CD8-positive, alpha-beta T cell (primary cell): ENCODE measurements at regions of chr22 and their contacts with region 1.

Region 1: GRCh38 chr22:30386960-30387827 is at the start of gene RNF215:
- DNase-seq: peak; percentile 60 to 91 (median 75)
- ATAC-seq: peak; percentile 79
- H3K4me3 ChIP-seq: peak within 1 kb of the TSS; percentile 33 to 40
- H3K4me3 Mint-ChIP-seq: peak within 1 kb of the TSS; percentile 85
- H3K27ac ChIP-seq: no peak within 1 kb of the TSS
- H3K27ac Mint-ChIP-seq: peak within 1 kb of the TSS; percentile 82
- H3K4me1 ChIP-seq: peaks cover 16% of the 10 kb centered on the region
- H3K4me1 Mint-ChIP-seq: peaks cover 26% of the 10 kb centered on the region
- H3K27me3 ChIP-seq: peaks cover 0 to 2% of the 10 kb centered on the region in 2 experiments
- H3K27me3 Mint-ChIP-seq: no peaks in the 10 kb centered on the region
- CTCF ChIP-seq: peak; percentile 87
- total RNA-seq, gene RNF215: 7.0 to 7.4 TPM

Region 2: DNA sequence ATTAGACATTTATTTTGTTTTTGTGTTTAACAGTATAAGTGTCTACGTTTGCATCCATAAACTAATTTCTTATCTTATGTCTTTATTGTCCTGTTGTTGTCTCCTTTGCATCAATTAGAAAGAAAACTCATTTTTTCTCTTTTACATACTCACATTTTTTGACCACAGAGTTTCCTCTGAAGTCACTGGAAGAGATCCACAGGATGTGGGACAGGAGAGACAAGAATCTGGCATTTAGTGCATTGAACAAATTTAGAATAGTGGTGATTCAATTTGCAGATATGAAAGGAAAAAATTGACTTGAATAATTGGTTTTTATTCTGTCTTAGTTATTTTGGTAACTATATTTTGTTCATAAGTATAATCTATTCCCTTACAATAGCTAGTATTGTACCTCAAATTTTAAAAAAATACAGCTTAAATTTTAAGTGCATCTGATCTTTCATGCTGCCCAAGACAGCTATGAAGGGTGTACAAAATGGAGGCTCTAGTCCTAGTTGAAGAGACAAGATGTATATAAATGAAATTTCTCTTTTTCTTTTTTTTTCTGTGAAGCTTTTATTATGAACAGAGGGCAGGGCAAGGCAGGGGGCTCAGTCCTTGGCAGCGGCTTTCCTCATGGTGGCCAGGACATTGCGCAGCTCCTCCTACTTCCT is 282.6 kb before region 1 on chr22:
- CTCF ChIA-PET with region 1: interaction called, 32 read pairs
- POLR2A ChIA-PET with region 1: no interaction called
- intact Hi-C with region 1: loop called (anchors 1 kb)
- DNase-seq: peak in 1 of 9 experiments; percentile 16
- ATAC-seq: no peak
- H3K4me3 ChIP-seq: no peak overlapping the region
- H3K4me3 Mint-ChIP-seq: no peak overlapping the region
- H3K27ac ChIP-seq: no peak overlapping the region
- H3K27ac Mint-ChIP-seq: no peak overlapping the region
- H3K4me1 ChIP-seq: peaks cover 14% of the 10 kb centered on the region
- H3K4me1 Mint-ChIP-seq: peaks cover 20% of the 10 kb centered on the region
- H3K27me3 ChIP-seq: no peaks in the 10 kb centered on the region
- H3K27me3 Mint-ChIP-seq: no peaks in the 10 kb centered on the region
- CTCF ChIP-seq: no peak

Region 3: GRCh38 chr22:30310881-30311771 is 76.1 kb before region 1 on chr22:
- CTCF ChIA-PET with region 1: interaction called, 12 read pairs
- POLR2A ChIA-PET with region 1: interaction called, 3 read pairs
- intact Hi-C with region 1: no loop called
- DNase-seq: no peak
- ATAC-seq: no peak
- H3K4me3 ChIP-seq: no peak overlapping the region
- H3K4me3 Mint-ChIP-seq: peak overlapping the region; percentile 63
- H3K27ac ChIP-seq: peak overlapping the region; percentile 53 to 77
- H3K27ac Mint-ChIP-seq: peak overlapping the region; percentile 98
- H3K4me1 ChIP-seq: peaks cover 98% of the 10 kb centered on the region
- H3K4me1 Mint-ChIP-seq: peaks cover 96% of the 10 kb centered on the region
- H3K27me3 ChIP-seq: no peaks in the 10 kb centered on the region
- H3K27me3 Mint-ChIP-seq: no peaks in the 10 kb centered on the region
- CTCF ChIP-seq: no peak

Region 4: DNA sequence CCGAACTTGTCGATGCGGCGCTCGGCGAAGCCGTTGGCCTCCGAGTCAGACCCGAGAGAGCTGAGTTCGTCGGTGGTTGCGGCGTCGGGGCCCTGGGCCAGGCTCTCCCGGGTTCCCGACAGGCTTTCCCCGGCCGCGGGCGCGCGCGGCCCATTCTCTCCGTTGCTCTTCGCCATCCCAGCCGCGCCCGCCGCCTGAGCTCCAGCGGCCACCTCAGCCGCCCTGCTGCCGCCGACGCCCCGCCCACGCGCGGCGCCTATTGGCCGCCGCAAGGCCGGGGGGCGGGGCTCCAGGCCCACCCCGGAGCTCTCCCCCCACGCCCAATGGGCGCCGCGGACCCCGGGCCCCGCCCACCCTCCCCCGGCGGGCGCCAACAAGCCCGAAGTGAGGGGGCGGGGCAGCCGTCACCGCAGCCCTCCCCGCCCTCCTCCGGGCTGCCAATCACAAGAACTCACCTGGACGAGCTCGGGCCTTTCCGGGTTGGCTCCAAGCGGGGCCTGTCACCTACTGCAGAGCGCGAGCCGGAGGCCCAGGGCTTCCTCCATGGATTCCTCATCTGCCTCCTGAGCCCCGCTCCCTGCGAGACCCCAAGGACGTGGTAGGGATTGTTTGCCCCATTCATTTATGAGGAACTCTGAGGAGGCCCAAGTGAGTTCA is 60.4 kb before region 1 on chr22 and contains the start of gene TBC1D10A:
- CTCF ChIA-PET with region 1: interaction called, 10 read pairs
- POLR2A ChIA-PET with region 1: interaction called, 5 read pairs
- intact Hi-C with region 1: loop called (anchors 1 kb)
- DNase-seq: peak; percentile 86 to 97 (median 94)
- ATAC-seq: peak; percentile 92
- H3K4me3 ChIP-seq: peak within 1 kb of the TSS; percentile 52 to 72
- H3K4me3 Mint-ChIP-seq: peak within 1 kb of the TSS; percentile 93
- H3K27ac ChIP-seq: peak within 1 kb of the TSS; percentile 68 to 86
- H3K27ac Mint-ChIP-seq: peak within 1 kb of the TSS; percentile 91
- H3K4me1 ChIP-seq: peaks cover 47% of the 10 kb centered on the region
- H3K4me1 Mint-ChIP-seq: peaks cover 45% of the 10 kb centered on the region
- H3K27me3 ChIP-seq: no peaks in the 10 kb centered on the region
- H3K27me3 Mint-ChIP-seq: no peaks in the 10 kb centered on the region
- CTCF ChIP-seq: no peak
- total RNA-seq, gene TBC1D10A: 77.5 to 87.3 TPM

Region 5: DNA sequence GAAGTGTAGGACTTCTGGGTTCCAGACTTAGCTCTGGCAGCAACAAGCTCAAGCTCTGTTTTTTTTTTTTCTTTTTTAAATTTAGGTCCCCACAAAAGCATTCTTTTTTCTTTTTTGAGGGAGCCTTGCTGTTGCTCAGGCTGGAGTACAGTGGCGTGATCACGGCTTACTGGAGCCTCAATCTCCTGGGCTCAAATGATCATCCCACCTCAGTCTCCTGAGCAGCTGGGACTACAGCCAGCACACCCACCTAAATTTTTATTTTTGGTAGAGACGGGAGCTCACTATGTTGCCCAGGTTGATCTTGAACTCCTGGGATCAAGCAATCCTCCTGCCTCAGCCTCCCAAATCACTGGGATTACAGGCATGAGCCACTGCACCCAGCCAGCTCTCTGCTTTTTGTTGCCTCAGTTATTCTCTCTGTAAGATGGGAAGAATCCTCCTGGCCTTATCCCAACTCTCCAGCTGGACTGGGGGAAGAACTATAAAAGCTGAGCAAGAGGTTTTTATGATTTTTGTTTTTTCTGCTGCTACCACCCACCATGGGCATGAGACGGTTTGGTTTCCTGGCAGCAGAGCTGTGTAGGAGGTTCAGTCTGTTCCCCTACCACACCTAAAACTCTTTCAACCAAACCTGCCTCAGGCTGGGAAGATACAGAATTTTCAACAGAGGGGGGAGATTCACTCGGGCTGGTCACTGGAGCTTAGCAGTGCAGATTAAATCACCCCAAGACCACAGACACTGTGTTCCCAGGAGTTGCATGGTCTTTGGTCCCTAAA is 26.7 kb after region 1 on chr22:
- CTCF ChIA-PET with region 1: interaction called, 12 read pairs
- POLR2A ChIA-PET with region 1: no interaction called
- intact Hi-C with region 1: no loop called
- DNase-seq: peak in 1 of 9 experiments; percentile 19
- ATAC-seq: peak; percentile 58
- H3K4me3 ChIP-seq: peak overlapping the region in 1 of 2 experiments; percentile 4
- H3K4me3 Mint-ChIP-seq: peak overlapping the region; percentile 38
- H3K27ac ChIP-seq: peak overlapping the region; percentile 9 to 36
- H3K27ac Mint-ChIP-seq: peak overlapping the region; percentile 88
- H3K4me1 ChIP-seq: peaks cover 38% of the 10 kb centered on the region
- H3K4me1 Mint-ChIP-seq: peaks cover 41% of the 10 kb centered on the region
- H3K27me3 ChIP-seq: no peaks in the 10 kb centered on the region
- H3K27me3 Mint-ChIP-seq: no peaks in the 10 kb centered on the region
- CTCF ChIP-seq: no peak

Region 6: GRCh38 chr22:30485362-30485988 is 98.3 kb after region 1 on chr22:
- CTCF ChIA-PET with region 1: interaction called, 149 read pairs
- POLR2A ChIA-PET with region 1: interaction called, 3 read pairs
- intact Hi-C with region 1: loop called in 1 of 2 experiments (anchors 1 kb)
- DNase-seq: peak; percentile 60 to 85 (median 75)
- ATAC-seq: peak; percentile 98
- H3K4me3 ChIP-seq: no peak overlapping the region
- H3K4me3 Mint-ChIP-seq: no peak overlapping the region
- H3K27ac ChIP-seq: no peak overlapping the region
- H3K27ac Mint-ChIP-seq: no peak overlapping the region
- H3K4me1 ChIP-seq: no peaks in the 10 kb centered on the region
- H3K4me1 Mint-ChIP-seq: no peaks in the 10 kb centered on the region
- H3K27me3 ChIP-seq: no peaks in the 10 kb centered on the region
- H3K27me3 Mint-ChIP-seq: peaks cover 2% of the 10 kb centered on the region
- CTCF ChIP-seq: peak; percentile 95

Region 7: DNA sequence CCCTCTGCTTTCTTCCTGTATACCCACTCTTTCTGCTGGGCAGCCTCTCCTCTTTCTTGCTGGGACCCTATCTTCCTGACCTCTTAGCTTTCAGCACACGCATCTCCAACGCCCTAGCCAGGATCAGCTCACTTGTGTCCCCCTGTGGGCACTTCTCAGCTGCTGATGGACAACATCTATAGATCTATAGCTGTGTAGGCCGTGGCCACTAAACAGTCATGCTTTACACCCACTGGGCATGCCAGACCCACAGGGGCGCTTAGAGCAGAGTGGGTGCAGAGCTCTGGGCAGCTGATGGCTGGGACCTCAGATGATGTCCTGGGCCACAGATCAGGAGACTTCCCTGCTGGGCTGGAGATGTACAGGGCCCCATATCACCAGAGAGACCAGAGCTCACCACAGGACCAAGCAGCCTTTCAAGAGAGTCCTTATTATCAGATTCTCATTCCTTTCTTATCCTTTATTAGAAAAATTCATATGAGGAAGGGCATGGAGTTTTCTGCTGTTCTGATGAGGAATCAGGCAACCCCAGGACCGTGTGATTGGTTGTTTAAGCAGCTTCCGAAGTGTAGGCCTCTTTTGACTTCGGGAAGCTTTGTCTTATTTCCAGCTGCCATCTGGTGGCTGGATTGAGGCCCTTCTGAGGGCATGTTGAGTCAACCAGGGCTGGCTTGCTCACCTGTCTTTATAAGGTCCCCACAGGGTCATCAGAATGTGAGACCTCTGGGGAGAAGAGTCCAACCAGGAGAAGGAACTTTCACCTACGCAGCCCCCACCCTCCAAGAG is 368.0 kb after region 1 on chr22:
- CTCF ChIA-PET with region 1: no interaction called
- POLR2A ChIA-PET with region 1: no interaction called
- intact Hi-C with region 1: loop called in 1 of 2 experiments (anchors 5 kb)
- DNase-seq: peak in 8 of 9 experiments; percentile 15 to 68 (median 48)
- ATAC-seq: peak; percentile 66
- H3K4me3 ChIP-seq: no peak overlapping the region
- H3K4me3 Mint-ChIP-seq: no peak overlapping the region
- H3K27ac ChIP-seq: no peak overlapping the region
- H3K27ac Mint-ChIP-seq: no peak overlapping the region
- H3K4me1 ChIP-seq: no peaks in the 10 kb centered on the region
- H3K4me1 Mint-ChIP-seq: no peaks in the 10 kb centered on the region
- H3K27me3 ChIP-seq: no peaks in the 10 kb centered on the region
- H3K27me3 Mint-ChIP-seq: no peaks in the 10 kb centered on the region
- CTCF ChIP-seq: peak; percentile 28